ENCODE measurements at regions of chrX and their contacts with region 1.

Region 1: DNA sequence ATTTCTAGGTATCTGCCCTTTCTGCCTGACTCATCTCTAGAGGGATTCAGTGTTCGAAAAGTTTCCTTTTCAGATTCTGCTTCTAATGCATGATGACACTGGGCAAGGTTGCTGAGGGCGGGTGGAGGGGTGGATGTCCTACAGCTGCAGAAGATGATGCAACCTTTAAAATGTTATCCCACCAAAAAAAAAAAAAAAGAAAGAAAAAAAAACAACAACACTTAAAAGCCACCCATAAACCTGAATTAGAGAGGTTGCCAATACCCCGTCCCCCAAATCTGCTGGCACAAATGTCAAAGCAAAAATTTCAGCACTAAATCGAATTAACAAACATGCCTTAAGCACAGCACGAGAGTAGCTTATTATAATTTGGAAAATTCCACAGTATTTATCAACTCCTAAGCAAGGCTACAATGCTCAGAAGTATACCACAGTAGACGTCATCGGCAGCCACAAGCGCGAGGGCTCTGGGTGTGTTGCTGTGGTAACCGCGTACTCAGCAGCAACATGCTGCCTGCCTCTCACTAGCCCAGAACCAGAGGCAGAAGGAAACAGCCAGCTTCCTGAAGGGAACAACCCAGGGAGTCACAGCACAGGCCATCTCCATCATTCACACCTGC is 167.5 kb upstream of the MAP3K15 start:
- DNase-seq: peak; percentile 73 to 92
- ATAC-seq: peak; percentile 74 to 91 (median 89)
- H3K4me3 ChIP-seq: no peak overlapping the region
- H3K4me3 Mint-ChIP-seq: peak overlapping the region; percentile 60
- H3K27ac ChIP-seq: peak overlapping the region; percentile 87
- H3K27ac Mint-ChIP-seq: peak overlapping the region; percentile 85 to 98
- H3K4me1 ChIP-seq: peaks cover 44% of the 10 kb centered on the region
- H3K4me1 Mint-ChIP-seq: peaks cover 53 to 67% of the 10 kb centered on the region in 2 donors
- H3K27me3 ChIP-seq: no peaks in the 10 kb centered on the region
- H3K27me3 Mint-ChIP-seq: peaks cover 0 to 6% of the 10 kb centered on the region in 2 donors
- CTCF ChIP-seq: no peak

Region 2: GRCh38 chrX:19599253-19599652 is 83.6 kb before region 1 on chrX:
- intact Hi-C with region 1: loop called (anchors 1 kb)
- DNase-seq: peak; percentile 24 to 32
- ATAC-seq: peak; percentile 88 to 94 (median 93)
- H3K4me3 ChIP-seq: no peak overlapping the region
- H3K4me3 Mint-ChIP-seq: peak overlapping the region; percentile 71
- H3K27ac ChIP-seq: peak overlapping the region; percentile 42
- H3K27ac Mint-ChIP-seq: peak overlapping the region; percentile 82 to 87
- H3K4me1 ChIP-seq: peaks cover 14% of the 10 kb centered on the region
- H3K4me1 Mint-ChIP-seq: peaks cover 27 to 39% of the 10 kb centered on the region in 2 donors
- H3K27me3 ChIP-seq: no peaks in the 10 kb centered on the region
- H3K27me3 Mint-ChIP-seq: no peaks in the 10 kb centered on the region
- CTCF ChIP-seq: no peak

Region 3: DNA sequence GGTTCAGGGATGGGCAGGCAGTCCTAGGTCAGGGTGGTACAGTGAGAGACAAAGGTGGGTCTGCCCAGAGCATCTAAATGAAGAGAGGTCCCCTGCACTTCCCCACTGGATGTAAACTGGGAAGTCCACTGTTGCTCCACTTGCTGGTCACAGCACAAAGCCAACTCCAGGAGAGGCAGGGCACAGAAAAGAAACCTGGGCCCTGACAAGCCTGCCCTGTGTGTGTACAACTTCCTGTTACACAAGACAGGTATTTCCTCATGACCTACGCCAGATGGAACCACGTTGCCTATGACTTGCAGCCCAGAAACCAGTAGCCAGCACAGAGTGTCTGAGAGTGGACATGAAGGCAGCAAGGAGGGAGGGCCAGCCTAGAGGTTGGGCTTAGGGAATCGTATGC is 42.8 kb after region 1 on chrX:
- intact Hi-C with region 1: loop called (anchors 5 kb)
- DNase-seq: peak in 1 of 2 donors; percentile 50
- ATAC-seq: peak; percentile 52 to 84 (median 60)
- H3K4me3 ChIP-seq: no peak overlapping the region
- H3K4me3 Mint-ChIP-seq: no peak overlapping the region
- H3K27ac ChIP-seq: no peak overlapping the region
- H3K27ac Mint-ChIP-seq: peak overlapping the region; percentile 71 to 90
- H3K4me1 ChIP-seq: peaks cover 34% of the 10 kb centered on the region
- H3K4me1 Mint-ChIP-seq: peaks cover 57 to 69% of the 10 kb centered on the region in 2 donors
- H3K27me3 ChIP-seq: no peaks in the 10 kb centered on the region
- H3K27me3 Mint-ChIP-seq: no peaks in the 10 kb centered on the region
- CTCF ChIP-seq: no peak

Region 4: DNA sequence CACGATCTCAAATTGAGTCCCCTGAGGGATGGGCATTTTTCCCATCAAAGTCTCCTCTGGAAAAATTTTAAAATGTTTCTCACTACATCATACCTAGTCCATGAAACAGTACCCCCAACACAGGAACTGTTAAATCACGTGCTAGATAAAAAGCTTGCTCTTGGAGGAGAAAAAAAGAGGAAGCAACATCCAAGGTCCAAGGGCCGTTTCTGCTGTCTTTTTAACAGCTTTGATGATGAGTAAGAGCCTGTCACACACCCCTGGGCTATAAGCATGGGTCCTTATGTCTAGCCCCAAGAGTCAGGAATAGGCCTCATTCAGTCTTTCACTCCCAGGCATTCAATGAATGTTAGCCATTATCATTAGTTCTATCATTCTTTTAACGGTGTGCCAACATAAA is 75.7 kb after region 1 on chrX:
- intact Hi-C with region 1: no loop called
- DNase-seq: no peak
- ATAC-seq: peak in 1 of 3 donors; percentile 60
- H3K4me3 ChIP-seq: no peak overlapping the region
- H3K4me3 Mint-ChIP-seq: peak overlapping the region; percentile 30
- H3K27ac ChIP-seq: no peak overlapping the region
- H3K27ac Mint-ChIP-seq: peak overlapping the region; percentile 78 to 83
- H3K4me1 ChIP-seq: peaks cover 15% of the 10 kb centered on the region
- H3K4me1 Mint-ChIP-seq: peaks cover 54 to 60% of the 10 kb centered on the region in 2 donors
- H3K27me3 ChIP-seq: no peaks in the 10 kb centered on the region
- H3K27me3 Mint-ChIP-seq: no peaks in the 10 kb centered on the region
- CTCF ChIP-seq: no peak